AG04449 (cell line): ENCODE measurements at regions of chr2 and their contacts with region 1.

Region 1: DNA sequence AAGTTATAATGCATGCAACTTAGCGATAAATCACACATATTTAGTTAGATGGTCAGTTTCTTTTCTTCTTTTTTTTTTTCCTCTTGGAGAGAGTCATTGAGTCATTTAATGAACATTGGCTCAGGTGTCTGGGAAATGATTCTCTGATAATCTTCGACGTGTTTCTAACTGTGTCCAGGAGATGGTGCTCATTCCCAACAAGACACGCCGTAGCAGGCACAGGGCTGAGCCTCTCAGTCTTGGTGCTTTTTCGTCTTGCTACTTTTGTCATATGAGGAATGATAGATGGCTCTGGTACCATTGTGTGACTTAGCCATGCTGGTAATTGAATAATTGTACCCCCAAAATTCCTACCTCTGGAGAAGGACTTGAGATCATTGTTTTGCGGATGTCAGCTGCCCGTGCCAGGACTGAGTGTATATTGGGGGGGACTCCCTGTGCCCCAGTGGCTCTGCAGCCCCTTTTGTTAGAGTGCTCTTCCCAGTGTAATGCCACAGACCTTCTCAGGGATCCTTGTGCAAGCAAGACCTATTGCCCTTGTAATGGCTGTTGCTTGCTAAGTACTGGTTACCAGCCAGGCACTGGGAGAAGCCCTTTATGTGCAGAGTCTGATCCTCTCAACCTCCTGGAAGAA is 107.6 kb upstream of the CYRIA start:
- DNase-seq: no peak
- H3K4me3 ChIP-seq: no peak overlapping the region
- CTCF ChIP-seq: peak; percentile 51

Region 2: GRCh38 chr2:17148407-17149145 is 375.4 kb after region 1 on chr2:
- CTCF ChIA-PET with region 1: interaction called, 19 read pairs
- POLR2A ChIA-PET with region 1: no interaction called
- DNase-seq: no peak
- H3K4me3 ChIP-seq: no peak overlapping the region
- CTCF ChIP-seq: peak; percentile 47

Region 3: GRCh38 chr2:17309741-17310339 is 536.6 kb after region 1 on chr2:
- CTCF ChIA-PET with region 1: interaction called, 36 read pairs
- POLR2A ChIA-PET with region 1: no interaction called
- DNase-seq: no peak
- H3K4me3 ChIP-seq: no peak overlapping the region
- CTCF ChIP-seq: peak; percentile 59